Activated T-helper 2 cell treated with anti-CD3 and anti-CD28 coated beads, Interferon-gamma antibody, Interleukin-2, Interleukin-4, amounts not matched to agents 10 μg/mL and 5 μg/mL and 100 μg/mL, durations not matched to agents 14 hours and 24 hours and 36 hours (primary cell): ENCODE measurements at regions of chr13 and their contacts with region 1.

Region 1: GRCh38 chr13:51614350-51614786 is 30.1 kb downstream of the WDFY2 start:
- DNase-seq: peak; percentile 34
- H3K4me3 Mint-ChIP-seq: peak overlapping the region; percentile 82
- H3K27ac Mint-ChIP-seq: peak overlapping the region; percentile 97
- H3K4me1 Mint-ChIP-seq: peaks cover 17% of the 10 kb centered on the region
- H3K27me3 Mint-ChIP-seq: no peaks in the 10 kb centered on the region

Region 2: DNA sequence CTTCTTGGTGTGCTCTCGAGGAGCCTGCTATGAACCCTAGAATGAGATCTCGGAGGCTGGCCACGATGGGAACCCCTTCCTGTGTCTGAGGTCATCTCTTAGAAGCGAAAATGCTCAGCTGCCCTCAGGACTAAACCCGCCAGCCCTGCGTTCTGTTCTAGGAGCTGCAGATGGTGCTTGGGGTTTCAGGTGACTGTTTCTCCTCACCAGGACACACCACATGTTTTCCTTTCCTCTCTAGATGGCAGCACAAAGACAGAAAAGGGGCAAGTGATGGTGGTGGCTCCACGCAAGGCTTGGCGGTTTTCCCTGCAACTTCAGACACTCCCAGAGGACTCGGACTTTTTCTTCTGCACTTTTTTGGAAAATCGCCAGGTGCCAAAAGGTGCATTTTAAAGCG is 644.7 kb before region 1 on chr13:
- intact Hi-C with region 1: no loop called
- DNase-seq: no peak
- H3K4me3 Mint-ChIP-seq: no peak overlapping the region
- H3K27ac Mint-ChIP-seq: no peak overlapping the region
- H3K4me1 Mint-ChIP-seq: no peaks in the 10 kb centered on the region
- H3K27me3 Mint-ChIP-seq: no peaks in the 10 kb centered on the region

Region 3: GRCh38 chr13:51740698-51741097 is 126.3 kb after region 1 on chr13:
- intact Hi-C with region 1: loop called (anchors 1 kb)
- DNase-seq: no peak
- H3K4me3 Mint-ChIP-seq: no peak overlapping the region
- H3K27ac Mint-ChIP-seq: peak overlapping the region; percentile 81
- H3K4me1 Mint-ChIP-seq: peaks cover 25% of the 10 kb centered on the region
- H3K27me3 Mint-ChIP-seq: no peaks in the 10 kb centered on the region